ENCODE measurements at regions of chr5 and their contacts with region 1.

Region 1: DNA sequence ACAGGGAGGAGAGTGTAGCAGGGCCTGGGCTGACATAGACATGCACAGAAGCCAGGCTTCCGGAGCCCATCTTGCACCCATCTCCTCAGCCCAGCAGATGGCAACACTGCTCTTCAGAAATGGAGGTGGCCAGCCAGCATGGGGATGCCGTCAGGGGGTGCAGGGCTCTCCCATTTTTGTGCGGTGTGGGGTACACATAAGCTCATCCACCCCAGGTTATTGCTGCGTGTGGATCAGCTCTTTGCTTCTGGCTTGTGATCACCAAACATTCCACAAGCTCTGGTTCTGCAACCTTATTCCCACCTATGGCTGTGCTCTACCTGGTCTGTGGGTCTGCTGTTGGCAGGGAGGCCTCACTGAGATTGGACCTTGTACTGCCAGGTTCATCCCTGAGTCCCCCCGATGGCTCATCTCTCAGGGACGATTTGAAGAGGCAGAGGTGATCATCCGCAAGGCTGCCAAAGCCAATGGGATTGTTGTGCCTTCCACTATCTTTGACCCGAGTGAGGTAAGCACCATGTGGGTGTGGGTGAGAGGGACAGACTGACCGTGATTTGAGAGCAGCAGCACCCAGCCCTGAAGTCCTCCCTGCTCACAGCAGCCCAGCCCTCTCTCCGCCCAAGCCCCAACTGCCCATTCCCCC is 17.3 kb downstream of the SLC22A5 start:
- DNase-seq: peak; percentile 78
- ATAC-seq: peak; percentile 83 to 86

Region 2: DNA sequence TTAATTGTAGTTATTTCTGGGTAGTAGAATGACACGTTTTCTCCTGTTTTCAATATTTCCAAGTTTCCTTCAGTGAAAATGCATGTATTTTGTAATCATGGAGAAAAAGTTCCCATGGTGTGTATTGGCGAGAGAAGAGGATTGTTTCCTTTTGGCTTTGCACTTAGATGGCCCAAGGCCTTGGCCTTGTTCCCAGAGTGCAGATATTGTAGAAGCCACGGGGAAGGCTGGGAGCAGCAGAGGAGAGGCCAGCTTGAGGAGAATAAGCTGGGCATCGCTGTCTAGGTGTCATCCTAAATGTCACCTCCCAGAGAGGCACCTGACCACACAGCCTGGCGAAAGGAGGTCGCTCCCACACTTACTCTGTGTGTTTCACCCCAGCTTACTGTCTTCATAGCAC is 59.9 kb after region 1 on chr5:
- intact Hi-C with region 1: no loop called
- DNase-seq: peak; percentile 86
- ATAC-seq: peak; percentile 83 to 97

Region 3: GRCh38 chr5:132500931-132501630 is 114.3 kb after region 1 on chr5:
- intact Hi-C with region 1: loop called (anchors 2 kb)
- DNase-seq: peak; percentile 72
- ATAC-seq: peak in 1 of 2 donors; percentile 4